ENCODE measurements at regions of chr11 and their contacts with region 1.

Region 1: GRCh38 chr11:31240338-31240904 is 129.1 kb downstream of the DCDC1 start:
- DNase-seq: no peak
- ATAC-seq: no peak
- H3K4me3 Mint-ChIP-seq: no peak overlapping the region
- H3K27ac Mint-ChIP-seq: no peak overlapping the region
- H3K4me1 Mint-ChIP-seq: no peaks in the 10 kb centered on the region
- H3K27me3 Mint-ChIP-seq: no peaks in the 10 kb centered on the region
- CTCF ChIP-seq: no peak

Region 2: DNA sequence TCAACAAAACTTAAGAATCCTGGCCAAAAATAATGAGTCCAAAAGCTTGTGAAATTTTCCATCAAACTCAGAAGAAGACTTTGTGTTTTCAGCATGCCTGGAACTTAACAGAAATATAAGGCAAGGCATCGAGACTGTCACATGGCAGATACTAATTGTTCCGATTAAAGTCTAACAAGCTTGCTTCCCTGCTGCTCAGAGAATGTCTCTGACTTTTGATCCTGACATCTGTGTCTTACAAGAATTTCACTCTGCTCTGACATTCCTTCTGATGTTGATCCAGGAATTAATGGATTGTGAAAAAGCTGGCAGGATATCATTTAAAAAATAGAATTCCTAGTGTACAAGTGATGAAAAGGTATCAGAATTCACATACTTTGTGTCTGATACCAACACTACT is 41.0 kb before region 1 on chr11:
- CTCF ChIA-PET with region 1: no interaction called
- POLR2A ChIA-PET with region 1: no interaction called
- intact Hi-C with region 1: no loop called
- DNase-seq: no peak
- ATAC-seq: no peak
- H3K4me3 Mint-ChIP-seq: no peak overlapping the region
- H3K27ac Mint-ChIP-seq: no peak overlapping the region
- H3K4me1 Mint-ChIP-seq: no peaks in the 10 kb centered on the region
- H3K27me3 Mint-ChIP-seq: no peaks in the 10 kb centered on the region
- CTCF ChIP-seq: no peak

Region 3: GRCh38 chr11:31870609-31871309 is 630.3 kb after region 1 on chr11:
- CTCF ChIA-PET with region 1: no interaction called
- POLR2A ChIA-PET with region 1: no interaction called
- intact Hi-C with region 1: loop called (anchors 10 kb)
- DNase-seq: no peak
- ATAC-seq: no peak
- H3K4me3 Mint-ChIP-seq: no peak overlapping the region
- H3K27ac Mint-ChIP-seq: no peak overlapping the region
- H3K4me1 Mint-ChIP-seq: no peaks in the 10 kb centered on the region
- H3K27me3 Mint-ChIP-seq: peaks cover 11% of the 10 kb centered on the region
- CTCF ChIP-seq: no peak

Measured in activated B cell treated with CpG ODN at 0.5 μM for 24 hours (primary cell).